ENCODE measurements at regions of chr2 and their contacts with region 1.

Region 1: DNA sequence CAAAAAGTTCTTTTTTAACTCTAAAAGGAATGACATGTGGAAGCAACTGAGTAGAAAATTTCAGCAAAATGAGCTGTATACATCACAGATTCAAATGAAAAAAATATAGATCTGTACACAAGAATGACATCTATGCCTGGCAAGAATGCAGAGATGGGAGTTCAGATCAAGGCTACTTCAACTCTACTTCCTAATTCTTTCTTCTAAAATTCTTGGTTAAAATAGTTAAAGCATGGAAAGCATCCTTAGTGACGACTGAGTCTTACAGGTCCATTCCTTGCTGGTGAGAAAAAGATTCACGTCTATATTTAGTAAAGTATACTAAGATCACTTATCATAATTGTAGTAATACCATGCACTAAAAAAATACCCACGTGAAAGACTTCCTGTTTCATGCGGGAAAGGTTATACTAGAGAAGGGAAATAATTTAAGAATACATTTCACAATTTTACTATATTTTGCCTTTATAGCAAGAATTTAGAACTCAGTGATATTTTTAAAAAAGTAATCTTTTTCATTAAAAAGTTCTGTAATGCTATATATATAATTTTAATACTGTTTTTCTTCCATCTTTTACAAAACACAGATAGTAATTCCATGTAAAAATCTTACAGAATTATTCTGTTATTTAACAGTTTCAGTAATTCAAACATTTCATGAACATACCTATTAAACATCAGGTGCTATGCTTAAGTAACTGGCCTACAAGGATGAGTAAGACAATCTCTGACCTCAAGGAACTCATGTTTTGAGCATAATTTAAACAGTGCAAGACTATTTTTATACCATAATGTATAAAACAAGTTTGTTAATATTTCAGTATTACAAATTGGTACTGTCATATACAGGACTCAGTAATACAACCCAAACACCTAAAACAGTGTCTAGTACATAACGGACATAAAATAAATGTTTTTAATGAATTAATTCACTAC is 159.6 kb downstream of the BAZ2B start:
- DNase-seq: no peak
- H3K4me3 ChIP-seq: no peak overlapping the region
- CTCF ChIP-seq: no peak

Region 2: GRCh38 chr2:159497256-159497655 is 40.5 kb after region 1 on chr2:
- in situ Hi-C with region 1: loop called (anchors 5 kb)
- DNase-seq: peak; percentile 48
- H3K4me3 ChIP-seq: no peak overlapping the region
- CTCF ChIP-seq: no peak

Region 3: DNA sequence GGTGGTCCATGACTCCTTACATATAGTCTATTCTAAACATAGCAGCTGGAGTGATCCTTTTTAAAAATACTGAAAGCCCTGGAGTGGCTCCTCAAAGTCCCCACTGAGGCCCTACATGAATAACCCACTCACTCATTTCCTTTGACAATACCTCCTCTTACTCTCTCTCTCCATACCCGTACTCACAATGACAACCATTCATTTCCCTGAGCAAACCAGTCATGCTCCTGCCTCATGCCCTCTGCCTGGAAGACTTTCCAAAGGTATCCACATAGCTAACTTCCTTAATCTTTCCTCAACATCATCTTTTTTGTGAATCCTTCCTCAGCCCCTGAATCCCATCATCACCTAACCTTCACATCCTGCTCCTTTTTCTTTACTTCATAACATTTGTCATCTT is 57.0 kb after region 1 on chr2:
- in situ Hi-C with region 1: no loop called
- DNase-seq: no peak
- H3K4me3 ChIP-seq: no peak overlapping the region
- CTCF ChIP-seq: no peak

Region 4: DNA sequence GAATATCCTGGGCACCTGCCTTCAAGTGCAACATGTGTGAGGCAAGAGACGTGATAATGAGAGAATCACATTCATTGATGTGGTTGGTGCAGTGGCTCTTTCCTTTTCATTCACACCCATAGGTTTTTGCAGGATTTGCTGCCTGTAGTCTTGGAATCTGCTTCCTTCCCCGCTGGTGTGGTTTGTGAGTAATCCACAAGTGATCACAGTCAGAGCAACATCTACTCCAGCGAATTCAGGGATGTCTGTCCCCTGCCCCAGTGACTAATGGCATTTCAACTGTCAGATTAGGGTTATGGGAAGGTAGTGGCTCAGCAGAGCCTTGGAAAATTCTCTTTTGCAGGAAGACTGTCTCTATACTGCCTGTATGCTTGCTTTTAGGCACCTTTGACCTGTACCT is 1262.4 kb after region 1 on chr2:
- in situ Hi-C with region 1: no loop called
- DNase-seq: peak; percentile 40
- H3K4me3 ChIP-seq: no peak overlapping the region
- CTCF ChIP-seq: no peak